ENCODE measurements at regions of chr3 and their contacts with region 1.

Region 1: GRCh38 chr3:186108941-186109865 is at the start of gene ETV5:
- DNase-seq: peak; percentile 98 to 99 (median 98)
- ATAC-seq: peak; percentile 95
- H3K4me3 ChIP-seq: peak within 1 kb of the TSS; percentile 75
- H3K27ac ChIP-seq: peak within 1 kb of the TSS; percentile 82
- H3K4me1 ChIP-seq: peaks cover 16 to 26% of the 10 kb centered on the region in 2 experiments
- H3K27me3 ChIP-seq: peaks cover 11 to 14% of the 10 kb centered on the region in 2 experiments; a peak in 4 of 5 replicates
- CTCF ChIP-seq: no peak
- EP300 ChIP-seq: no peak
- POLR2A ChIP-seq: peak; percentile 84
- RAD21 ChIP-seq: no peak
- polyA plus RNA-seq, gene ETV5: 9.2 to 12.6 TPM

Region 2: GRCh38 chr3:186002884-186003472 is 106.2 kb before region 1 on chr3:
- CTCF ChIA-PET with region 1: no interaction called
- POLR2A ChIA-PET with region 1: no interaction called
- in situ Hi-C with region 1: no loop called
- intact Hi-C with region 1: loop called (anchors 5 kb)
- DNase-seq: peak; percentile 23 to 53 (median 37)
- ATAC-seq: peak; percentile 91
- H3K4me3 ChIP-seq: no peak overlapping the region
- H3K27ac ChIP-seq: no peak overlapping the region
- H3K4me1 ChIP-seq: no peaks in the 10 kb centered on the region
- H3K27me3 ChIP-seq: peaks cover 0 to 4% of the 10 kb centered on the region in 2 experiments; a peak in 3 of 5 replicates
- CTCF ChIP-seq: peak; percentile 54 to 63 (median 58); a peak in 5 of 6 replicates
- EP300 ChIP-seq: no peak
- POLR2A ChIP-seq: no peak
- RAD21 ChIP-seq: peak in 1 of 2 experiments; percentile 68; a peak in 2 of 4 replicates

Region 3: DNA sequence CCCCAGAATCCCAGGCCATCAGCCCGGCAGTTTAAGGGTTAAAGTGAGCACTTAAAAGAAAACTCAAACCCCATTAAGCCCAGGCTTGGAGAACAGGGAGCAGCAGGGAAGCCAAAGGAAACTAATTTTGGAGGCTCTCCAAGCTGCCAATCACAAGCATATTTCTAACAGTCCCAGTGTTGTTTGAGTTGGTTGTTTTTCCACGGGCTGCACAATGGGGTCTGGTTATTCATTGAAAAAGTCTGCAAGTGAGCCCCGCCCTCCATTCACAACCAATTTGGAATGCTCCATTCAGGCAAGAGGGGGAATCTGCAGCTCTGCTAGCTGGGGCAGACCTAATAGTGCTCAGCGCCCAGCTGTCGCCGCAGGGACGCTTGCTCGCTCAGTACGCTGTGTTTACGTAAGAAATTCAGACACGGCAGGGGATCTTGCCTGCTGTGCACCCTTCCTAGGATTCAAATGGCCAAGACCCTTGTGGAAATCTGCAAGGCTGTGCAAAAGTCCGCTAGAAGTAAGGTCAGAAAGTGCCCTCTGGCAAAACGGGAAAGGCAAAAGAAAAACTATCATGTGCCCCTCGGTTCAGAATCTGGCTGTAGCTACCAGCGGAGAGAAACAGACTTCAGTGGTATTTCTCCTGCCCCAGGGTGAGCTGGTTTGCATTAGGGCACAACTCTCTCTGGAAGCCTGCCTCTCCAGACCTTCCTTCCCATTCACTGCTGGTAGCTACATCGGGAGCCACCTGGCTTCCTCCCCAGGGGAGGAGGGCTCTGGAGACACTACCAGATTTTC is 11.3 kb before region 1 on chr3:
- CTCF ChIA-PET with region 1: no interaction called
- POLR2A ChIA-PET with region 1: interaction called, 34 read pairs
- in situ Hi-C with region 1: no loop called
- intact Hi-C with region 1: no loop called
- DNase-seq: peak; percentile 35 to 55 (median 48)
- ATAC-seq: peak; percentile 73
- H3K4me3 ChIP-seq: no peak overlapping the region
- H3K27ac ChIP-seq: no peak overlapping the region
- H3K4me1 ChIP-seq: peaks cover 15 to 23% of the 10 kb centered on the region in 2 experiments; a peak in 4 of 5 replicates
- H3K27me3 ChIP-seq: no peaks in the 10 kb centered on the region
- CTCF ChIP-seq: no peak
- EP300 ChIP-seq: no peak
- POLR2A ChIP-seq: no peak
- RAD21 ChIP-seq: no peak

Region 4: DNA sequence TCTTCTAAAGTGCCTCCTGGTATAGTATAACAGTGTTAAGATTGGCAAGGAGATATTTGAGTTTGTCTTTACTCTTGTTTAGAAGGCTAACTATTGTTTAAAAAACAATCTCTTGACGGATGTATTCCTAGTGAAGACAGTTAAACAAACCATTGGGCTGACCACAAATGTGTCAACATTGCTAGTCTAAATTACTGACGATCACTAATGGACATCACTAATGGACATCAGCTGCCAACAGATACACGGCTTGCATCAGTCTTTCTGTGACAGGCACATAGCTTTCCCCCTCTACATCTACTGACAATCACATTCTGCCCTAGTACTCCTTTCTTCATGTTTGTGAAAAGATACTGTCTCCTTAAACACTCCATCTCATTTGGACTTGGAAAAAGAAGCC is 56.8 kb after region 1 on chr3:
- CTCF ChIA-PET with region 1: no interaction called
- POLR2A ChIA-PET with region 1: no interaction called
- in situ Hi-C with region 1: no loop called
- intact Hi-C with region 1: no loop called
- DNase-seq: no peak
- ATAC-seq: no peak
- H3K4me3 ChIP-seq: no peak overlapping the region
- H3K27ac ChIP-seq: no peak overlapping the region
- H3K4me1 ChIP-seq: no peaks in the 10 kb centered on the region; a peak in 2 of 5 replicates
- H3K27me3 ChIP-seq: peaks cover 2 to 6% of the 10 kb centered on the region in 2 experiments; a peak in 3 of 5 replicates
- CTCF ChIP-seq: no peak
- EP300 ChIP-seq: no peak
- POLR2A ChIP-seq: no peak
- RAD21 ChIP-seq: no peak

Region 5: DNA sequence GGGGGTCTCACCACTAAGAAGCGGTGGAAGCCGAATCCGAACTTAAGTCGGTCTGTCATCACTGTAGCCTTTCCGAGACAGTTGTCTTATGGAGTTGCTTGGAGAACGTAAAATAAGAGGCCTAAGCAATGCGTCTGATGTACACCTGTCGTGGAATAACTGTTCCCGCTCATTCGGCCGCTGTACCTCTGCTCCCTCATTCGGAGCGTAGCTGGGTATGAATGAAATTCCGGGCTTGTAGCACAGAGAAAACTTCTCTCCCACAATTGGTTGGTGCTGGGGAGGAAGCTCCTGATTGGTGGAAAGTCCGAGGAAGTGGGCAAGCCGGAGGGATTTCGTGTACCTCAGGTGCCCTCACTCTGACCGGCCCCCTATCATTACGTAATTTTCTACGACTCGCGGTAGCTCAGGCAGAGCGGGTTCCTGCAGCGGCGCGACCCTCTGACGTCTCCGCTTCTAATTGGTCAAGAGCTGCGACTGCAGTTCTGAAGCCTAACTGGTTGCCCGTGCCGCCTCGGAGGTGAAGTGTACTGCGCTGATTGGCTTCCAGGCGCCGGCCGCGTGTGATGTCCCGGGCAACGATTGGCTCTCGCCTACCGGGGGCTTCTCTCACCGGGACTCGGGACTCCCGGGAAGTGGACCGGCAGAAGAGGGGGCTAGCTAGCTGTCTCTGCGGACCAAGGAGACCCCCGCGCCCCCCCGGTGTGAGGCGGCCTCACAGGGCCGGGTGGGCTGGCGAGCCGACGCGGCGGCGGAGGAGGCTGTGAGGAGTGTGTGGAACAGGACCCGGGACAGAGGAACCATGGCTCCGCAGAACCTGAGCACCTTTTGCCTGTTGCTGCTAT is 461.1 kb after region 1 on chr3 and contains the start of gene DNAJB11:
- CTCF ChIA-PET with region 1: no interaction called
- POLR2A ChIA-PET with region 1: no interaction called
- in situ Hi-C with region 1: no loop called
- intact Hi-C with region 1: loop called (anchors 1 kb)
- DNase-seq: peak; percentile 93 to 99 (median 97)
- ATAC-seq: peak; percentile 88
- H3K4me3 ChIP-seq: peak within 1 kb of the TSS; percentile 96
- H3K27ac ChIP-seq: peak within 1 kb of the TSS; percentile 95
- H3K4me1 ChIP-seq: peaks cover 3 to 11% of the 10 kb centered on the region in 2 experiments; a peak in 4 of 5 replicates
- H3K27me3 ChIP-seq: no peaks in the 10 kb centered on the region
- CTCF ChIP-seq: no peak
- EP300 ChIP-seq: peak; percentile 37; the same call in 1 of the 2 replicates
- POLR2A ChIP-seq: peak; percentile 98
- RAD21 ChIP-seq: no peak
- polyA plus RNA-seq, gene DNAJB11: 14.8 to 16.7 TPM

Measured in K562 (cell line).